Activated CD4-positive, alpha-beta memory T cell treated with anti-CD3 and anti-CD28 coated beads for 36 hours (primary cell): ENCODE measurements at regions of chr14 and their contacts with region 1.

Region 1: DNA sequence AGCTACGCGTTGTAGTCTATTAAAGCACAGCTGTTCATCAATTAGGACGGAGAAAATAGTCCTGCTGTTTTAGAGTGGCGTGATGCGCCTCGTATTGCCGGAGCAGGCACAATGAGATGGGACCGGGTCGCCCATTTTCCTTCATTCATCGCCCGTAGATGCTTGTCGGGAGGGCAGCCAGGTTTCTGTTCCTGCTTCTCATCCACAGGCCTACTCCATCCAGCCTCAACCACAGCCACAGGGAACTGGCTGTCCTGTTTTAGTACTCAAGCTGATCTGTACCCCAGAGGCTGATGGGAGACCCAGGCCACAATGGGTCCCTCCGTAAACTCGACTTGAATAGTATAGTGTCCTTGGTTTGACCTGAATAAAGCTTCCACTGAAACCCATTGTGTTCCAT is 264.0 kb downstream of the VRK1 start:
- DNase-seq: no peak
- H3K4me3 Mint-ChIP-seq: no peak overlapping the region
- H3K27ac Mint-ChIP-seq: no peak overlapping the region
- H3K4me1 Mint-ChIP-seq: peaks cover 6% of the 10 kb centered on the region
- H3K27me3 Mint-ChIP-seq: no peaks in the 10 kb centered on the region

Region 2: DNA sequence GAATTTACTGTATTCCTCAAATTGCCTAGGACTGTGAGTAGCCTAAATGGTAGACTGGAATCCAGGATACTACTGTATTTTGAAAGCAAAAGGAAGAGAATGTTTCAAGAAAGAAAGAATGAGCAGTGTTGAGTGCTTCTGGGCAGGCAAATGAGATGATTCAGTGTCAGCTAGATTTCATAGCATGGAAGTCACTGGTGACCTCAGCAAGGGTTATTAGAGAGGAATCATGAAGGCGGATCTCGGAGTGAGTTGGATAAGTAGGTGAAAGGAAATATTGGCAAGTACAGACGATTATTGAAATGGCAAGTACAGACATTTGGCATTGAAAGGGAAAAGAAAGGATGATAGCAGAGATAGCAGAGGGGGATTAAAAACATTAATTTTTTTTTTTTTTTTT is 236.9 kb before region 1 on chr14:
- CTCF ChIA-PET with region 1: no interaction called
- POLR2A ChIA-PET with region 1: no interaction called
- intact Hi-C with region 1: no loop called
- DNase-seq: no peak
- H3K4me3 Mint-ChIP-seq: no peak overlapping the region
- H3K27ac Mint-ChIP-seq: no peak overlapping the region
- H3K4me1 Mint-ChIP-seq: peaks cover 13% of the 10 kb centered on the region
- H3K27me3 Mint-ChIP-seq: no peaks in the 10 kb centered on the region

Region 3: GRCh38 chr14:97095269-97095668 is 34.1 kb after region 1 on chr14:
- CTCF ChIA-PET with region 1: no interaction called
- POLR2A ChIA-PET with region 1: no interaction called
- intact Hi-C with region 1: no loop called
- DNase-seq: no peak
- H3K4me3 Mint-ChIP-seq: no peak overlapping the region
- H3K27ac Mint-ChIP-seq: no peak overlapping the region
- H3K4me1 Mint-ChIP-seq: no peaks in the 10 kb centered on the region
- H3K27me3 Mint-ChIP-seq: peaks cover 1% of the 10 kb centered on the region

Region 4: DNA sequence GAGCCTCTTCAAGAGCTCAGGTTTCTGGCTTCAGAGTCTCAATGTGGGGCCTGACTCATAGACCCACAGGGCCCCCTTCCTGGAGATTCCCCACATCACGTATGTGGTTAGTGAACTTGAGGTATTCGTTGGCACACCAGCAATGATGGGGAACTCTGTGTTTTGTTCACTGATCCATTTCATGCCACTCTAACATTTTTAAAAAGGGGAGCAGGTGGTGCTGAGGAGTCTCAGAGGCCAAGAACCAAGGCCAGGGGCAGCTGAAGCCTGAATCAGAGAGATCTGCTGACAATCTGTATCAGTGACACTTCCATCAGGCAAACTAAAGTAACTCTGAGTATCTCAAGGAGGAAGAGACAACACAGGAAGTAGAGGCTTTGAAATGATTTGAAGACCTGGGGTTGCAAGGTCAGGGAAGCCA is 59.4 kb after region 1 on chr14:
- CTCF ChIA-PET with region 1: no interaction called
- POLR2A ChIA-PET with region 1: no interaction called
- intact Hi-C with region 1: loop called (anchors 10 kb)
- DNase-seq: peak; percentile 82
- H3K4me3 Mint-ChIP-seq: peak overlapping the region; percentile 20
- H3K27ac Mint-ChIP-seq: peak overlapping the region; percentile 97
- H3K4me1 Mint-ChIP-seq: peaks cover 31% of the 10 kb centered on the region
- H3K27me3 Mint-ChIP-seq: no peaks in the 10 kb centered on the region